Mammary epithelial cell (primary cell): ENCODE measurements at regions of chr3 and their contacts with region 1.

Region 1: GRCh38 chr3:138180375-138181029 is 5.8 kb upstream of the DBR1 start:
- DNase-seq: peak; percentile 37
- H3K4me3 ChIP-seq: no peak overlapping the region
- H3K27ac ChIP-seq: no peak overlapping the region
- H3K4me1 ChIP-seq: peaks cover 7% of the 10 kb centered on the region
- H3K27me3 ChIP-seq: no peaks in the 10 kb centered on the region
- CTCF ChIP-seq: peak; percentile 46 to 71

Region 2: DNA sequence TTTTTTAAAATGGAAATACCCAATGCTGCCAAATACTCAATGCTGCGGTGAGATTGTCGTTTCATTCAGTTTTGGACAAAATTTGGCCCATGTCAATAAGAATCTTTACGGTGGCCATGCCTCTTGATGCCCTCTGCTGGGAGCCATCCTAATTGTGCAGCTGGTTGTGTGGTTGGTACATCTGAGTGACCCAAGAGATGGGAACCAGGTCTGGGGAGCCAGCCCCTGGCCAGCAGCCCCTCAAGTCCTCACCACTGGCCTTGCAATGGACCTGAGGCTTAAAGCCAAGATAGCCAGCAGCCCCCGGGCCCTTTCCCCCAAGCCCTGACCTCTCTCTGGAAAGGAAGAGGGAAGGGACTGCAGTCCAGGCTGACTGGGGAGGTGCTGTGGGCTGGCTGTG is 217.5 kb after region 1 on chr3:
- CTCF ChIA-PET with region 1: no interaction called
- dilution Hi-C with region 1: no loop called
- in situ Hi-C with region 1: no loop called
- intact Hi-C with region 1: loop called (anchors 2 kb)
- DNase-seq: no peak
- H3K4me3 ChIP-seq: no peak overlapping the region
- H3K27ac ChIP-seq: no peak overlapping the region
- H3K4me1 ChIP-seq: no peaks in the 10 kb centered on the region
- H3K27me3 ChIP-seq: no peaks in the 10 kb centered on the region
- CTCF ChIP-seq: peak; percentile 29 to 65

Region 3: GRCh38 chr3:138426226-138426625 is 245.7 kb after region 1 on chr3:
- CTCF ChIA-PET with region 1: no interaction called
- dilution Hi-C with region 1: no loop called
- in situ Hi-C with region 1: no loop called
- intact Hi-C with region 1: loop called (anchors 1 kb)
- DNase-seq: peak; percentile 19
- H3K4me3 ChIP-seq: no peak overlapping the region
- H3K27ac ChIP-seq: no peak overlapping the region
- H3K4me1 ChIP-seq: no peaks in the 10 kb centered on the region
- H3K27me3 ChIP-seq: no peaks in the 10 kb centered on the region
- CTCF ChIP-seq: no peak